Activated naive CD4-positive, alpha-beta T cell treated with anti-CD3 and anti-CD28 coated beads for 36 hours (primary cell): ENCODE measurements at regions of chr12 and their contacts with region 1.

Region 1: GRCh38 chr12:104215638-104216297 is at the start of gene TXNRD1:
- DNase-seq: peak; percentile 88
- H3K4me3 Mint-ChIP-seq: peak within 1 kb of the TSS; percentile 65
- H3K27ac Mint-ChIP-seq: no peak within 1 kb of the TSS
- H3K4me1 Mint-ChIP-seq: peaks cover 39% of the 10 kb centered on the region
- H3K27me3 Mint-ChIP-seq: no peaks in the 10 kb centered on the region
- total RNA-seq, gene TXNRD1: 86.0 to 86.9 TPM

Region 2: GRCh38 chr12:103884316-103884715 is 331.5 kb before region 1 on chr12:
- CTCF ChIA-PET with region 1: no interaction called
- intact Hi-C with region 1: loop called (anchors 5 kb)
- DNase-seq: peak; percentile 75
- H3K4me3 Mint-ChIP-seq: no peak overlapping the region
- H3K27ac Mint-ChIP-seq: no peak overlapping the region
- H3K4me1 Mint-ChIP-seq: peaks cover 22% of the 10 kb centered on the region
- H3K27me3 Mint-ChIP-seq: no peaks in the 10 kb centered on the region

Region 3: GRCh38 chr12:104189915-104190555 is 25.7 kb before region 1 on chr12:
- CTCF ChIA-PET with region 1: no interaction called
- intact Hi-C with region 1: no loop called
- DNase-seq: no peak
- H3K4me3 Mint-ChIP-seq: no peak overlapping the region
- H3K27ac Mint-ChIP-seq: no peak overlapping the region
- H3K4me1 Mint-ChIP-seq: no peaks in the 10 kb centered on the region
- H3K27me3 Mint-ChIP-seq: no peaks in the 10 kb centered on the region

Region 4: DNA sequence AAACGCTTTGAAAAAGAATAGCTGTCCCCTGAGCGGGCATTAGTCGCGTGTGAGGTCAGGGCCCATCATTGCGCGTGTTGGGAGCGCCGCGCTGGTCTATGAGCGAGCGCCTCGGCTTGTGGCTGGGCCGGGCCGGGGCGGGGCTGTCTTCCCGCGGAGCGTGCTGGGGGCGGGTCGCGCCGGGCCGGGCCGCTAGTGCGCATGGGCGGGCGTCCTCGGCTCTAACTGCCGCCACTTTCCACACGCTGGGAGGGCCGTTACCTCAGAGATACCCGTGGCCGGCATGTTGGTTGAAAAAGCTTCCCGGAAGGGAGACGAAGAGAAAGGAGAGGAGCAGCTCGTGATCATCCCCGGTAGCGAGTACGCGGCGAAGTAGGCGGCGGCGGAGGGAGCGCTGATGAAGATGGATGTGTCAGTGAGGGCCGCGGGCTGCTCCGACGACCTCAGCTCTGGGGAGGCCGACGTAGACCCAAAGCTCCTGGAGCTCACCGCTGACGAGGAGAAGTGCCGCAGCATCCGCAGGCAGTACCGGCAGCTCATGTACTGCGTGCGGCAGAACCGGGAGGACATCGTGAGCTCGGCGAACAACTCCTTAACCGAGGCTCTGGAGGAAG is 87.9 kb after region 1 on chr12 and contains the start of gene EID3:
- CTCF ChIA-PET with region 1: interaction called, 6 read pairs
- intact Hi-C with region 1: loop called (anchors 1 kb)
- DNase-seq: peak; percentile 90
- H3K4me3 Mint-ChIP-seq: peak within 1 kb of the TSS; percentile 87
- H3K27ac Mint-ChIP-seq: peak within 1 kb of the TSS; percentile 77
- H3K4me1 Mint-ChIP-seq: peaks cover 52% of the 10 kb centered on the region
- H3K27me3 Mint-ChIP-seq: no peaks in the 10 kb centered on the region
- total RNA-seq, gene EID3: 3.4 TPM

Region 5: GRCh38 chr12:104877123-104877705 is 661.4 kb after region 1 on chr12:
- CTCF ChIA-PET with region 1: no interaction called
- intact Hi-C with region 1: loop called (anchors 1 kb)
- DNase-seq: peak; percentile 59
- H3K4me3 Mint-ChIP-seq: no peak overlapping the region
- H3K27ac Mint-ChIP-seq: no peak overlapping the region
- H3K4me1 Mint-ChIP-seq: peaks cover 3% of the 10 kb centered on the region
- H3K27me3 Mint-ChIP-seq: peaks cover 2% of the 10 kb centered on the region

Region 6: DNA sequence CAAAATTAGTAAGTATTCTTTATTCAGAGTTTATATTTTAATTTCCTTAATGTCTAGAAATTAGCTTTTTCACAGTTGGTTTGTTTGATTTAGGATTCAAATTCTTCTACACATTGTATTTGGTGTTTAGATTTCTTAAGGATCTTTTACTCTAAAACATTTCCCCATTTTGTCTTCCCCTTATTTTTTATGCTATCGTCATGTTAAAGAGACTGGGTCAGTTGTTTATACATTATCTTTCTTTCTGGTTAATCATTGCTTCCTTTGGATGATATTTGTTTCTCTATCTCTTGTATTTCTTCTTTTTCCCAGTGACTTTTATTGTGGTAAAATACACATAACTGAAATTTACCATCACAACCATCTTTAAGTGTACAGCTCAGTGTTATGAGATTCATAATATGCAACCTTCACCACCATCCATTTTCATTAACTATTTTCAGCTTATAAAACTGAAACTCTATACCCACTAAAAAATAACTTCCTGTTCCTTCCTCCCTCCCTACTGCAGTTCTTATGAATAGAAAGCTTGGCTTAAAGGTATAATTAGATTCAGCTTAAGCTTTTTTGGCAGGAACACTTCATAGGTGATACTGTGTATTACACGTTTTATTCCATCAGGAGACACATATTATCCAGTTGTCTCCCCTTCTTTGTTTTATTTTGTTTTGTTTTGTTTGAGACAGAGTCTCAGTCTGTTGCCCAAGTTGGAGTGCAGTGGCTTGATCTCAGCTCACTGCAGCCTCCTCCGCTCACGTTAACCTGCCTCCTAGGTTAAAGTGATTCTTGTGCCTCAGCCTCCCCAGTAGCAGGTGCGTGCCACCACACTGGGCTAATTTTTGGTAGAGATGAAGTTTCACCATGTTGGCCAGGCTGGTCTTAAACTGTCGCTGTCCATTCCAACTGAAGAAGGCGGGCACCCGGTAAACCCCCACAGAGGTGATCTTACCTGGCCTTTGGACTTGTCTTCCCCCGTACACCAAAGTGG is 815.3 kb after region 1 on chr12:
- CTCF ChIA-PET with region 1: no interaction called
- intact Hi-C with region 1: loop called (anchors 5 kb)
- DNase-seq: no peak
- H3K4me3 Mint-ChIP-seq: no peak overlapping the region
- H3K27ac Mint-ChIP-seq: no peak overlapping the region
- H3K4me1 Mint-ChIP-seq: peaks cover 32% of the 10 kb centered on the region
- H3K27me3 Mint-ChIP-seq: no peaks in the 10 kb centered on the region